Activated CD4-positive, alpha-beta memory T cell treated with anti-CD3 and anti-CD28 coated beads for 36 hours (primary cell): ENCODE measurements at regions of chr10 and their contacts with region 1.

Region 1: GRCh38 chr10:74262856-74263255 is 111.8 kb downstream of the ADK start:
- DNase-seq: no peak
- H3K4me3 Mint-ChIP-seq: no peak overlapping the region
- H3K27ac Mint-ChIP-seq: no peak overlapping the region
- H3K4me1 Mint-ChIP-seq: peaks cover 7% of the 10 kb centered on the region
- H3K27me3 Mint-ChIP-seq: no peaks in the 10 kb centered on the region

Region 2: DNA sequence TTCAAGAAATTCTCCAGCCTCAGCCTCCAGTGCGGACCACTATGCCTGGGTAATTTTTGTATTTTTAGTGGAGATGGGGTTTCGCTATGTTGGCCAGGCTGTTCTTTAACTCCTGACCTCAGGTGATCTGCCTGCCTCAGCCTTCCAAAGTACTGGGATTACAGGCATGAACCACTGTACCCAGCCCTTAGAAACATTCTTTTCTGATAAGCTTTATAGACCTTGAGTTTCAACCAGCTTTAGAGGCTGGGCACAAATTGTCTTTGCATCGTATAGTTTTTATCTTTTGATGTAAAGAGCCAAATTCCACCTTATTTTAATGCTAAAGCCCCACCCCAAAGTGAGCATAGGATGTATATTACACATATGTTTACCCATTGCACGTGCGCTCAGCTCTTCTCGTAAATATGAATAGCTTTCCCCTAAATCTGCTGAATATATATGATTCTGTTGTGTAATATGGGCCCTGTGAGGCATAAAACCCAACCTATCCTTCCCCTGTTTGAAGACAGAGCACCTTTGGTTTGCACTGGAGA is 13.0 kb after region 1 on chr10:
- CTCF ChIA-PET with region 1: interaction called, 11 read pairs
- POLR2A ChIA-PET with region 1: no interaction called
- intact Hi-C with region 1: no loop called
- DNase-seq: no peak
- H3K4me3 Mint-ChIP-seq: no peak overlapping the region
- H3K27ac Mint-ChIP-seq: no peak overlapping the region
- H3K4me1 Mint-ChIP-seq: no peaks in the 10 kb centered on the region
- H3K27me3 Mint-ChIP-seq: no peaks in the 10 kb centered on the region

Region 3: DNA sequence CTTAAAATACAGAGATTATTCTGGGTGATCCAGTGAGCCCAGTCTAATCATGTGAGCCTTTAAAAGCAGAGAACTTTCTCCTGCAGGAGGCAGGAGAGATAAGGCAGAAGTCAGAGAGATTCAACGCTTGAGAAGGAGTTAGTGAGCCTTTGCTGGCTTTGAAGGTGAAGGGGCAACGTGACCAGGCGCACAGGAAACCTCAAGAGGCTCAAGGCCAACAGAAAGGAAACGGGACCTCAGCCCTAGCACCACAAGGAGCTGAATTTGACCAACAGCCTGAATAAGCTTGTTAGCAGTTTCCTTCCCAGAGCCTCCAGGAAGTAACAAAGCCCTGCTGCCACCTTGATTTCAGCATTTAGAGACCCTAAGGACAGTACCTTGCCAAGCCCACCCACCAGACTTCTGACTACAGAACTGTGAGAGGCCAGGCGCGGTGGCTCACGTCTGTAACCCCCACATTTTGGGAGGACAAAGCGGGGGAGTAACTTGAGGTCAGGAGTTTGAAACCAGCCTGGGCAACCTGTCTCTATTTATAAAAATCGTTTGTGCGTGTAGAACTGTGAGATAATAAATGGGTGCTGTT is 476.2 kb after region 1 on chr10:
- CTCF ChIA-PET with region 1: no interaction called
- POLR2A ChIA-PET with region 1: no interaction called
- intact Hi-C with region 1: loop called (anchors 2 kb)
- DNase-seq: peak; percentile 55
- H3K4me3 Mint-ChIP-seq: no peak overlapping the region
- H3K27ac Mint-ChIP-seq: no peak overlapping the region
- H3K4me1 Mint-ChIP-seq: peaks cover 12% of the 10 kb centered on the region
- H3K27me3 Mint-ChIP-seq: no peaks in the 10 kb centered on the region

Region 4: DNA sequence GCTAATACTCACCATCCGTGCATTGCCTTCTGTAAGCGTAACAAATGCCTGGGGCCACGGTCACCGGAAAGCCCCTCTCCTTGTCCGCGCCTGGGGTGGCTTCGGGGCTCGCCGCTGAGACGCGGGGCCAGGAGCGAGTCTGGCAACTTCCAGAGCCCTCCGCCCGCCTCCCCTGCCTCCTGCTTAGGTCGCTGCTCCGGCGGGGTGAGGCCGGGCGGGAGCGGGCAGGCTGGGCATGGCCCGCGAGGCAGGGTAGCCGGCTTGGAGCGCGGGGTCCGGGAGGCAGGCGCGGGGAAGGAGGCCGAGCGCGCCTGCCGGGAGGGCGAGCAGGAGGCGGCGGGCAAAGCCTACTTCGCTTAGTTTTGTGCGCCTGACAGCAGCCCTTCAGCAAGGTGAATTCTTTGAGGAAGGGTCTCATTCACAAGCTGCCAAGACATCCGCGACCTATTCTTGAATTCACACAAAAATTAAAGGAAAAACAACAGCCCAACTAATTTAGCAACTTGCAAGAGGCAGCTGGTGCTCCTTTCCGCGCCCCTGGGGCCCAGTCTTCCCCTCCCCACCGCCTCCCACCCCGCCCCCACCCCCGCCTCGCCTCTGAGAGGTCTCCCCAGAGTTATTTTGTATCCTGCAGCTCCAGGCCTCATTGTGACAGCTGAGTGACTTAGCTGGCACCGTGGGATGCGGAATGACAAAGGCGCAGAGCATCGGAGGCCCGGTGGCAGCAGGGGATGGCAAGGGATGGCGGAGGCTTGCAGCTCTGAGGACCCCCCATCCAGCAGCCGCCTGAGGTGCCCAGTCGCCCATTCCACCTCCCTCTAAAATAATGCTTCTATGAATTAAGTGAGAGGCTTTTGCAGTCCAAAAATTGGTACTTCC is 550.8 kb after region 1 on chr10:
- CTCF ChIA-PET with region 1: no interaction called
- POLR2A ChIA-PET with region 1: no interaction called
- intact Hi-C with region 1: loop called (anchors 10 kb)
- DNase-seq: no peak
- H3K4me3 Mint-ChIP-seq: no peak overlapping the region
- H3K27ac Mint-ChIP-seq: no peak overlapping the region
- H3K4me1 Mint-ChIP-seq: no peaks in the 10 kb centered on the region
- H3K27me3 Mint-ChIP-seq: no peaks in the 10 kb centered on the region

Region 5: DNA sequence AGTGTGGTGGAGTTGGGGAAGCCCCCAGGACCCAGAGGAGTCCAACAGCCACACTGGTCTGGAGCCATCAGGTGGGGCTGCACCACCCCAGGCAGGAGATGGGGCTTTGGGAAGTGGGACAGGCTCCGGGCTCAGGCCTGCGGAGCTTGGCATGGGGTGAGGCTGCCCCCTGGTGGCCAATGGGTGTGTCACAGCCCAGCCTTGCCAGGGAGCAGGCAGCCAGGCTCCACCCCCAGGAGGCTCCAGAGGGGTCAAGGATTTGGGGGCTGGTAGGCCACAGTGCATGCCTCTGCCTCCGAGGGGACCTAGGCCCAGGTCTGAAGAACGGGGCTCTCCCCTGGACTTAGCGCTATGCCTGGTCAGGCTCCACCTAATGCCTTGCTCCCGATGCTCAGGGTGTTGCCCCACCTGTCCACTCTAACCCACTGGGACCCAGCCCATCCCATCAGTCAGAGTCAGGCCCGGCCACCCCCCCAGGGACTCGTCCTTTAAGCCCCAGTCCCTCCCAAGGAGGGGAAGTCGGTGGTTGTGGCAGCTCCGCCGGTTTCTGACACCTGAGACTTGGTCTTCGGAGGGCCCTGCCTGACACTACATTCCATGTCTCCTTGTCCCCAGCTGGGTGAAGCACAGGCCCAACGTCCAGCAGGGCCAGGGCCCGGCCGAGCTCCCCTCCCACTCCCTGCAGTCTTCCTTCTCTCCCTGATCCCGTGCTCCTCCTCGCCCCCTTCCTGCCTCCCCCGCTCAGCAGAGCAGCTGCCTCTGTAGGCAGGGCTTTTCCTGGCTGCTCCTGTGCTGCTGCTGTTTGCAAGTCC is 837.3 kb after region 1 on chr10:
- CTCF ChIA-PET with region 1: no interaction called
- POLR2A ChIA-PET with region 1: no interaction called
- intact Hi-C with region 1: loop called (anchors 1 kb)
- DNase-seq: peak; percentile 87
- H3K4me3 Mint-ChIP-seq: no peak overlapping the region
- H3K27ac Mint-ChIP-seq: no peak overlapping the region
- H3K4me1 Mint-ChIP-seq: no peaks in the 10 kb centered on the region
- H3K27me3 Mint-ChIP-seq: no peaks in the 10 kb centered on the region